IMR-90 (cell line): ENCODE measurements at regions of chr7 and their contacts with region 1.

Region 1: GRCh38 chr7:148987010-148987750 is 41.1 kb downstream of the PDIA4 start:
- DNase-seq: peak; percentile 91
- ATAC-seq: peak; percentile 87
- H3K4me3 ChIP-seq: peak overlapping the region; percentile 74
- H3K27ac ChIP-seq: peak overlapping the region; percentile 11
- H3K4me1 ChIP-seq: peaks cover 1% of the 10 kb centered on the region; the same call in 1 of the 2 replicates
- H3K27me3 ChIP-seq: no peaks in the 10 kb centered on the region
- CTCF ChIP-seq: no peak
- POLR2A ChIP-seq: no peak
- RAD21 ChIP-seq: no peak

Region 2: GRCh38 chr7:149028346-149029109 is 41.3 kb after region 1 on chr7 and contains the start of gene PDIA4:
- CTCF ChIA-PET with region 1: no interaction called
- POLR2A ChIA-PET with region 1: no interaction called
- dilution Hi-C with region 1: no loop called
- in situ Hi-C with region 1: no loop called
- intact Hi-C with region 1: loop called (anchors 1 kb)
- DNase-seq: peak; percentile 99
- ATAC-seq: peak; percentile 95
- H3K4me3 ChIP-seq: peak within 1 kb of the TSS; percentile 84
- H3K27ac ChIP-seq: peak within 1 kb of the TSS; percentile 63
- H3K4me1 ChIP-seq: no peaks in the 10 kb centered on the region
- H3K27me3 ChIP-seq: no peaks in the 10 kb centered on the region
- CTCF ChIP-seq: peak; percentile 34; the same call in 1 of the 2 replicates
- POLR2A ChIP-seq: peak; percentile 59
- RAD21 ChIP-seq: peak; percentile 9; the same call in 1 of the 2 replicates
- total RNA-seq, gene PDIA4: 277 and 304 TPM in 2 replicates